ENCODE measurements at regions of chr1 and their contacts with region 1.

Region 1: DNA sequence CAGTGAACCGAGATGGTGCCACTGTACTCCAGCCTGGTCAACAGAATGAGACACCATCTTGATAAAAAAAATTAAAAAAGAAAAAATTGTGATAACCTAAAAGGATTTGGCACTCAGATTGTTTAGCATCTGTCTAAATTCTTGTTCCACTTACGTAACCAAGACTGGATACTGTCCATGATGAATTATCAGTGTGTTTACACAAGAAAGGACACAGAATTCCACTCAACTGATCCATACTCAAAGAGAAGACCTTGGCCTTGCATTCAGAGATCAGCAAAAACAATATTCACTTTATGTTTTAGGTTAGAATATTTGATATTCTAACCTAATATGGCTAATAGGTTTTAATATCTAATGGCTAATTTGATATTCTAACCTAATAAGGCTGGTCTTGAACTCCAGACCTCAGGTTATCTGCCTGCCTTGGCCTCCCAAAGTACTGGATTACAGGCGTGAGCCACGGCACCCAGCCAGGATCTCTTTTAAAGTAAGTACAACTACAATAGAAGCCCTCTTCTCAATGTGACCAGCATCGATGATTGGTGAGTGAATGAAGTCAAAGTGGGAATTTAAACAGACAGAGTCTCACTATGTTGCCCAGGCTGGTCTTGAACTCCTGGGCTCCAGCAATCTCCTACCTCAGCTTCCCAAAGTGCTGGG is 43.1 kb upstream of the COX20 start:
- DNase-seq: no peak
- ATAC-seq: no peak
- H3K4me3 ChIP-seq: no peak overlapping the region
- H3K4me3 Mint-ChIP-seq: no peak overlapping the region
- H3K27ac ChIP-seq: no peak overlapping the region
- H3K27ac Mint-ChIP-seq: no peak overlapping the region
- H3K4me1 ChIP-seq: no peaks in the 10 kb centered on the region
- H3K4me1 Mint-ChIP-seq: no peaks in the 10 kb centered on the region
- H3K27me3 ChIP-seq: no peaks in the 10 kb centered on the region
- H3K27me3 Mint-ChIP-seq: peaks cover 3% of the 10 kb centered on the region
- CTCF ChIP-seq: no peak

Region 2: DNA sequence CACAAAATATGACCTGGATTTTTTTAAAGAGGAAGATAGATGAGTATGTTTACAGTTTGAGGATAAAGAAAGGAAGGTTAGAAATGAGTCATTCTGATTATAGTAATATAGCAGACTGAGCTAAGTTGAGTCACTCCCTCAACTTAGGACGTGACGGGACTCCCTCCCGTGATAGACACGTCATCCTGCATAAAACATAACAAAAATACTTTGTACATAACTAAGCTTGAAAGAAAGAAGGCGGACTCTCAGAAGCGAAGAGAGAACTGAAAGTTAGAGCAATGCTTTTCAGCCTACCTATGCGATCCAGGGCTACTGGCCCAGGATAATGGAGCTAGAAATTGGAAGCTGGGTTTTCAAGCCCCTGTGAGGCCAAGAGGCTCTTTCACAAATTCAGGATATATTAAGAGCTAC is 192.4 kb before region 1 on chr1:
- CTCF ChIA-PET with region 1: interaction called, 148 read pairs
- POLR2A ChIA-PET with region 1: interaction called, 4 read pairs
- intact Hi-C with region 1: loop called (anchors 1 kb)
- DNase-seq: peak in 5 of 9 experiments; percentile 6 to 38 (median 24)
- ATAC-seq: peak; percentile 87
- H3K4me3 ChIP-seq: no peak overlapping the region
- H3K4me3 Mint-ChIP-seq: no peak overlapping the region
- H3K27ac ChIP-seq: no peak overlapping the region
- H3K27ac Mint-ChIP-seq: no peak overlapping the region
- H3K4me1 ChIP-seq: no peaks in the 10 kb centered on the region
- H3K4me1 Mint-ChIP-seq: no peaks in the 10 kb centered on the region
- H3K27me3 ChIP-seq: no peaks in the 10 kb centered on the region
- H3K27me3 Mint-ChIP-seq: no peaks in the 10 kb centered on the region
- CTCF ChIP-seq: no peak

Region 3: GRCh38 chr1:246537887-246538286 is 1745.6 kb after region 1 on chr1:
- CTCF ChIA-PET with region 1: no interaction called
- POLR2A ChIA-PET with region 1: no interaction called
- intact Hi-C with region 1: no loop called
- DNase-seq: no peak
- ATAC-seq: no peak
- H3K4me3 ChIP-seq: no peak overlapping the region
- H3K4me3 Mint-ChIP-seq: no peak overlapping the region
- H3K27ac ChIP-seq: no peak overlapping the region
- H3K27ac Mint-ChIP-seq: no peak overlapping the region
- H3K4me1 ChIP-seq: no peaks in the 10 kb centered on the region
- H3K4me1 Mint-ChIP-seq: no peaks in the 10 kb centered on the region
- H3K27me3 ChIP-seq: no peaks in the 10 kb centered on the region
- H3K27me3 Mint-ChIP-seq: no peaks in the 10 kb centered on the region
- CTCF ChIP-seq: no peak